Mammary epithelial cell (primary cell): ENCODE measurements at regions of chr19 and their contacts with region 1.

Region 1: GRCh38 chr19:52171321-52172169 is at the start of gene ZNF836:
- DNase-seq: peak; percentile 73
- H3K4me3 ChIP-seq: peak within 1 kb of the TSS; percentile 74 to 93 (median 89)
- H3K27ac ChIP-seq: peak within 1 kb of the TSS; percentile 48
- H3K4me1 ChIP-seq: no peaks in the 10 kb centered on the region
- H3K27me3 ChIP-seq: no peaks in the 10 kb centered on the region
- CTCF ChIP-seq: no peak
- total RNA-seq, gene ZNF836: 10.0 to 11.2 TPM

Region 2: GRCh38 chr19:52095172-52096014 is 76.2 kb before region 1 on chr19 and contains the start of gene ZNF841:
- CTCF ChIA-PET with region 1: no interaction called
- dilution Hi-C with region 1: no loop called
- in situ Hi-C with region 1: no loop called
- intact Hi-C with region 1: loop called (anchors 2 kb)
- DNase-seq: peak; percentile 93
- H3K4me3 ChIP-seq: peak within 1 kb of the TSS; percentile 77 to 93 (median 90)
- H3K27ac ChIP-seq: peak within 1 kb of the TSS; percentile 88
- H3K4me1 ChIP-seq: peaks cover 3% of the 10 kb centered on the region
- H3K27me3 ChIP-seq: no peaks in the 10 kb centered on the region
- CTCF ChIP-seq: no peak
- total RNA-seq, gene ZNF841: 25.2 to 28.9 TPM

Region 3: DNA sequence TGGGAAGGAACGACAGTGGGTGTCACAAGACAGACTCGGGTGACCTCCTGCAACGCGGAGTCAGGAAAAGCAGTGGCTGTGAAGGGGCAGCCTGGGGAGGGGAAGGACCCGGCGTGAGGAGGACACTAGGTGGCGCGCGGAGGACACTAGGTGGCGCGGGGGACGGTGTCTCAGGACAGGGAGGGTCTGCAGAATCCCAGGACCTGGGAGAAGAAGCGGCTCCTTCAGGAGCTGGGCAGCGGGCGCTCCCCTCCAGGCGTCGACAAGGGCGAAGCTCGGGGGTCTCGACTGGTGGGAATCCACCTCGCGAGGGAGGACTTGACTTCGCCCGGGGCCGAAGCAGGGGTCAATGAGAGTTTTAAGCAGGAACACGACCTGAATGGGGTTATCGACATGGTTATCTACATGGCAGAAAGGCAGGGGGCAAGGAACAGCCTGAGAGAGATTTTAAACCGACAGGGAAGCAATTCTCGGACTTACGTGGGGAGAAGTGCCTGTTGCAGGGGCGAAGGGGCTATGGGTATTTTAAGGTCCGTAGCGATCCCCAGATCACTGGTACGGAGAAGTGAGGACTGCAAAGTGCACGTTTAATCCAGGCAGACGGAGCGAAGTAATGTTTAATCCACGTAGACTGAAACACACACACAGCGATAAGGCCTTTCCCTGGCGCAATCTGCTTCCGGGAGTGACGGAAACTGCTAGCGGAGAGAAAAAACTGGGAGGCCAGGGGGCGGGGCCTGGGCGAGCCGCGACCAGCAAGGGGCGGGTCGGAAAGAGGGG is 32.1 kb before region 1 on chr19 and contains the start of gene ZNF616:
- CTCF ChIA-PET with region 1: no interaction called
- dilution Hi-C with region 1: no loop called
- in situ Hi-C with region 1: no loop called
- intact Hi-C with region 1: loop called (anchors 2 kb)
- DNase-seq: peak; percentile 92
- H3K4me3 ChIP-seq: peak within 1 kb of the TSS; percentile 85 to 86 (median 85)
- H3K27ac ChIP-seq: peak within 1 kb of the TSS; percentile 58
- H3K4me1 ChIP-seq: peaks cover 6% of the 10 kb centered on the region
- H3K27me3 ChIP-seq: no peaks in the 10 kb centered on the region
- CTCF ChIP-seq: peak; percentile 45 to 82
- total RNA-seq, gene ZNF616: 9.7 to 10.3 TPM

Region 4: GRCh38 chr19:52189735-52190486 is 18.4 kb after region 1 on chr19 and contains the start of gene PPP2R1A:
- CTCF ChIA-PET with region 1: no interaction called
- dilution Hi-C with region 1: no loop called
- in situ Hi-C with region 1: no loop called
- intact Hi-C with region 1: loop called (anchors 1 kb)
- DNase-seq: peak; percentile 100
- H3K4me3 ChIP-seq: peak within 1 kb of the TSS; percentile 70 to 95 (median 88)
- H3K27ac ChIP-seq: peak within 1 kb of the TSS; percentile 91
- H3K4me1 ChIP-seq: peaks cover 18% of the 10 kb centered on the region
- H3K27me3 ChIP-seq: no peaks in the 10 kb centered on the region
- CTCF ChIP-seq: no peak
- total RNA-seq, gene PPP2R1A: 213 to 299 TPM

Region 5: DNA sequence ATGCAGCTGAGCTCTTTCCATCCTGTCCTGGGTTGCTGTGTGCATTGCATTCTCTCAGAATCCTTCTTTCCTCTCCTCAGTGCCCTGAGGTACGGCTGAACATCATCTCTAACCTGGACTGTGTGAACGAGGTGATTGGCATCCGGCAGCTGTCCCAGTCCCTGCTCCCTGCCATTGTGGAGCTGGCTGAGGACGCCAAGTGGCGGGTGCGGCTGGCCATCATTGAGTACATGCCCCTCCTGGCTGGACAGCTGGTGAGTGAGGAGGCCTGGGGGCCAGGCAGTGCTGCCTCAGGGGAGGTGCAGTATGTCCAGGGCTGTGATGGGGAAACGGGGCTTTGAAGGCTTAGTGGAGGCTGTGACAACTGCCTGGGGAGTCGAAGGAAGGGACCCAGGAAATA is 48.1 kb after region 1 on chr19:
- CTCF ChIA-PET with region 1: no interaction called
- dilution Hi-C with region 1: loop called (anchors 5 kb)
- in situ Hi-C with region 1: no loop called
- intact Hi-C with region 1: no loop called
- DNase-seq: no peak
- H3K4me3 ChIP-seq: no peak overlapping the region
- H3K27ac ChIP-seq: no peak overlapping the region
- H3K4me1 ChIP-seq: no peaks in the 10 kb centered on the region
- H3K27me3 ChIP-seq: no peaks in the 10 kb centered on the region
- CTCF ChIP-seq: no peak

Region 6: GRCh38 chr19:52248241-52248640 is 76.7 kb after region 1 on chr19:
- CTCF ChIA-PET with region 1: no interaction called
- dilution Hi-C with region 1: no loop called
- in situ Hi-C with region 1: no loop called
- intact Hi-C with region 1: no loop called
- DNase-seq: peak; percentile 42
- H3K4me3 ChIP-seq: no peak overlapping the region
- H3K27ac ChIP-seq: no peak overlapping the region
- H3K4me1 ChIP-seq: no peaks in the 10 kb centered on the region
- H3K27me3 ChIP-seq: no peaks in the 10 kb centered on the region
- CTCF ChIP-seq: peak; percentile 24 to 64